ENCODE measurements at regions of chr5 and their contacts with region 1.

Region 1: GRCh38 chr5:138352071-138352721 is at the start of gene KDM3B:
- DNase-seq: peak; percentile 95
- H3K27ac ChIP-seq: peak within 1 kb of the TSS; percentile 92
- CTCF ChIP-seq: peak; percentile 100

Region 2: GRCh38 chr5:138213161-138214029 is 138.8 kb before region 1 on chr5 and contains the start of gene CDC23:
- CTCF ChIA-PET with region 1: interaction called, 10 read pairs
- POLR2A ChIA-PET with region 1: no interaction called
- DNase-seq: peak; percentile 100
- H3K27ac ChIP-seq: peak within 1 kb of the TSS; percentile 73
- CTCF ChIP-seq: no peak

Region 3: DNA sequence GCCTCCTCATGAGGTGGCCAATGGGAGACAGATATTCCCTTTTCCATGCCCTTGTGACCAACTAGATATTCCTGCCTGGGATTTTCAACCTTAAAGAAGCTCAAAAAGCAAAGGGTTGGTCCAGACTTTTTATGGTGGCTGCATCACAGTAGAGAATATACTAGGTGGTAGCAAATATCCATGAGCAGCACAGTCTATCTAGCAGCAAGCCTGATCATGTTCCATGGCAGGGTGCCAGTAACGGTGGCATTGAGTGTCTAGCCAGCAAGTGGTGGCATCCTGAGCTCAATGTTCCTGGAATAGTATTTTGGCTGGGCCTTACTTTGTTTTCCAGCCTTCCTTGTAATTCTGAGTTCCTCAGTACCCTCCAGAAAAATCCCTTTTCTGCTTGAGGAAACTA is 46.4 kb before region 1 on chr5:
- CTCF ChIA-PET with region 1: interaction called, 10 read pairs
- POLR2A ChIA-PET with region 1: no interaction called
- DNase-seq: peak; percentile 41
- H3K27ac ChIP-seq: no peak overlapping the region
- CTCF ChIP-seq: no peak

Region 4: DNA sequence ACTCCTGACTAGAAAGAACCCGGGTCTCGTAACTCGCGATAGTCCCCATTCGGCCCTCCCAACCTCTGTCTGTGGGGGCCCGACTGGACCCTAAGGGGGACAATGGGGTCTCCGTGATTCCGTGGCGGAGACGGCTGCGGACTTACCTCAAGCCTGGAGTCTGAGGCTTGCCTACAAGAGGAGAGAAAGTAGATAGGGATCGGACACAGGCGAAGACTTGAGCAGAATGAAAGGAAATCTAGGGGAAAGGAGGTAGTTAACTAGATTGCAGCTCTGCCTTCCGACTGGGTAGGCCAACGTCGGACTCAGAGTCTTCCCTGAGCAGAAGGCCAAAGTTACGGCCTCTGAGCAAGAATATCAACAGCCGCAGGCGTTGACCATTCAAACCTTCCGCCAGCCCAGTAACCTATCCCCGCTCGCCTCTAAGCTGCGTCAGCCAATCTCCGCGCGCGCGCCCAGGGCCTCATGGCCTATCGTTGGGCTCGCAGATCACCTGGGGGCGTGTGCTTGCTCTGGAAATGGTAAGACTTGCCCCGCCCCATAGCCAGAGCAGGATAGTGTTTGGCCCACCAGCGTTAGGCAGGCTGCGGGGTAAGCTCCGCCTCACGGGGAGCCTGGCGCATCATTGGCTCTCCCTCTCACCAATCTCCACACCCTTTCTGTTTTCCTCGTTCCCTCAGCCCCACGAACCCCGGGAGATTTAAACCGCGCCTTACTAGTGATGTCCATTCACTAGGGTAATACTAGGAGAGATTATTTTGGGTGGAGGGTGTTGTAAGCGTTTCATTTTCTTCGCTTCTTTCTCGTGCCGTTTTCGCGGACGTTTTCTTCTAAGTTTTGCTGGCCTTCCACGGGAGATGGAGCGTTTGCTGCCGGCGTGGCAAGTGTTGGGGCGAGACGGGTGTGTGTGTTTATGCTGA is 20.5 kb before region 1 on chr5 and contains the start of gene CDC25C:
- CTCF ChIA-PET with region 1: interaction called, 86 read pairs
- POLR2A ChIA-PET with region 1: interaction called, 6 read pairs
- DNase-seq: peak; percentile 99
- H3K27ac ChIP-seq: peak within 1 kb of the TSS; percentile 90
- CTCF ChIP-seq: no peak

Region 5: GRCh38 chr5:138337685-138338410 is 14.3 kb before region 1 on chr5 and contains the start of gene FAM53C:
- CTCF ChIA-PET with region 1: interaction called, 86 read pairs
- POLR2A ChIA-PET with region 1: interaction called, 12 read pairs
- DNase-seq: peak; percentile 94
- H3K27ac ChIP-seq: peak within 1 kb of the TSS; percentile 89
- CTCF ChIP-seq: no peak

Region 6: DNA sequence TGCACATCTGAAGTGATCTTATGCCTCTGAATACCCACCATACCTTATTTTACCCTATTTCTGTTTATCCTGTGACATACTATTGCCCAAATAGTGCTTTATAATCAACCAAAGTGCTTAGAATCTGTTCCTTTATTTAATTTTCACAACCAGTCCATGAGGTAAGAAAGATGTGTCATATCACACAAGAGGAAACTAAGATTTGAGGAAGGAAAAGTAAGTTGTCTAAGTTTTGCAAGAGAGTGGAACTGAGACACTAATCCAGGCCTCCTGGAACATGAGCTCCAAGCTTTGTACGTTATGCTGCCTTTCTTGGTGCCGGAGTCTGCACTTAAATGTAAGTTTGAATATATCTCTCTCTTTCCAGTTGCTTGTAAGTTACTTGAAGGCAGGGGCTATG is 17.5 kb after region 1 on chr5:
- CTCF ChIA-PET with region 1: interaction called, 35 read pairs
- POLR2A ChIA-PET with region 1: no interaction called
- DNase-seq: no peak
- H3K27ac ChIP-seq: no peak overlapping the region
- CTCF ChIP-seq: no peak

Measured in RWPE1 (cell line).